ENCODE measurements at regions of chr14 and their contacts with region 1.

Region 1: DNA sequence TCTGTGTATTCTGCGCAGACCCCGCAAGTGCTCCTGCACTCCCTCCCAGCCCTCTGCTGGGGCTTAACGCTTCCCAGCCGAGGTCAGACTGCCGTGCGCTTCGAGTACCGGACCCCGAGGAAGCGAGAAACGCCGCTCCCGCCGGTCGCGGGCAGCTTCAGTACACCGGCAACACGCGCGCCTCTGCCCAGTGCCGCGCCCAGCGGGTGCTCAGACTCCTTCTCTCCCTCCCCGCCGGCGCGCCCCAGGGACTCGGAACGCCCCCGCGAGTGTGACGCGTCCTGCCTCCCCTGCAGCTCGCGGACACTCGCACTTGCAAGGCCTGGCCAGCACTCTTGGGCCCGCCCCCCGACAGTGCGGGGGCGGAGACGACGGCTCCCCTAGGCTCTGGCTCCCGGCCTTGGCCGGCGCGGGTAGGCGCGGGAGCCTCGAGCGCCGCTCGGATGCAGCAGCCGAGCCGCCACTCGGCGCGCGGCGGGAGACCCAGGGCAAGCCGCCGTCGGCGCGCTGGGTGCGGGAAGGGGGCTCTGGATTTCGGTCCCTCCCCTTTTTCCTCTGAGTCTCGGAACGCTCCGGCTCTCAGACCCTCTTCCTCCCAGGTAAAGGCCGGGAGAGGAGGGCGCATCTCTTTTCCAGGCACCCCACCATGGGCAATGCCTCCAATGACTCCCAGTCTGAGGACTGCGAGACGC is at the start of gene PTGER2:
- DNase-seq: peak; percentile 88 to 94 (median 94)
- ATAC-seq: peak; percentile 91 to 95
- H3K4me3 ChIP-seq: peak within 1 kb of the TSS; percentile 14
- H3K27ac ChIP-seq: no peak within 1 kb of the TSS
- H3K4me1 ChIP-seq: no peaks in the 10 kb centered on the region
- H3K27me3 ChIP-seq: no peaks in the 10 kb centered on the region
- total RNA-seq, gene PTGER2: 0.34 to 1.6 (median 1.1) TPM

Region 2: GRCh38 chr14:52473557-52473956 is 159.5 kb after region 1 on chr14:
- intact Hi-C with region 1: loop called in 1 of 4 experiments (anchors 5 kb)
- DNase-seq: no peak
- ATAC-seq: no peak
- H3K4me3 ChIP-seq: no peak overlapping the region
- H3K27ac ChIP-seq: no peak overlapping the region
- H3K4me1 ChIP-seq: no peaks in the 10 kb centered on the region
- H3K27me3 ChIP-seq: no peaks in the 10 kb centered on the region